ENCODE measurements at regions of chr5 and their contacts with region 1.

Region 1: GRCh38 chr5:177425801-177426565 is 493 bp upstream of the GRK6 start:
- DNase-seq: peak; percentile 100
- ATAC-seq: peak; percentile 82
- H3K4me3 ChIP-seq: peak overlapping the region; percentile 28 to 74 (median 61)
- H3K4me3 Mint-ChIP-seq: peak overlapping the region; percentile 93
- H3K27ac ChIP-seq: peak overlapping the region; percentile 82 to 88
- H3K27ac Mint-ChIP-seq: peak overlapping the region; percentile 97
- H3K4me1 ChIP-seq: peaks cover 47 to 49% of the 10 kb centered on the region in 2 donors
- H3K4me1 Mint-ChIP-seq: peaks cover 49% of the 10 kb centered on the region
- H3K27me3 ChIP-seq: no peaks in the 10 kb centered on the region
- H3K27me3 Mint-ChIP-seq: no peaks in the 10 kb centered on the region
- CTCF ChIP-seq: no peak

Region 2: GRCh38 chr5:177311723-177312648 is 114.0 kb before region 1 on chr5 and contains the start of gene MXD3:
- CTCF ChIA-PET with region 1: interaction called, 3 read pairs
- POLR2A ChIA-PET with region 1: no interaction called
- intact Hi-C with region 1: loop called (anchors 1 kb)
- DNase-seq: peak; percentile 94
- ATAC-seq: peak; percentile 89
- H3K4me3 ChIP-seq: peak within 1 kb of the TSS; percentile 15 to 80 (median 63)
- H3K4me3 Mint-ChIP-seq: peak within 1 kb of the TSS; percentile 90
- H3K27ac ChIP-seq: peak within 1 kb of the TSS; percentile 27 to 34
- H3K27ac Mint-ChIP-seq: peak within 1 kb of the TSS; percentile 84
- H3K4me1 ChIP-seq: peaks cover 40 to 58% of the 10 kb centered on the region in 2 donors
- H3K4me1 Mint-ChIP-seq: peaks cover 41% of the 10 kb centered on the region
- H3K27me3 ChIP-seq: no peaks in the 10 kb centered on the region
- H3K27me3 Mint-ChIP-seq: no peaks in the 10 kb centered on the region
- CTCF ChIP-seq: no peak
- total RNA-seq, gene MXD3: 10.8 and 11.5 TPM in 2 replicates

Region 3: GRCh38 chr5:177446200-177447065 is 20.4 kb after region 1 on chr5 and contains the start of gene PRR7:
- CTCF ChIA-PET with region 1: interaction called, 152 read pairs
- POLR2A ChIA-PET with region 1: interaction called, 103 read pairs
- intact Hi-C with region 1: loop called (anchors 1 kb)
- DNase-seq: peak; percentile 91
- ATAC-seq: peak; percentile 64
- H3K4me3 ChIP-seq: peak within 1 kb of the TSS in 4 of 5 experiments; percentile 45 to 66 (median 54)
- H3K4me3 Mint-ChIP-seq: peak within 1 kb of the TSS; percentile 82
- H3K27ac ChIP-seq: peak within 1 kb of the TSS; percentile 68 to 77
- H3K27ac Mint-ChIP-seq: peak within 1 kb of the TSS; percentile 92
- H3K4me1 ChIP-seq: peaks cover 34 to 50% of the 10 kb centered on the region in 2 donors
- H3K4me1 Mint-ChIP-seq: peaks cover 48% of the 10 kb centered on the region
- H3K27me3 ChIP-seq: peaks cover 0 to 14% (median 0%) of the 10 kb centered on the region in 4 experiments
- H3K27me3 Mint-ChIP-seq: no peaks in the 10 kb centered on the region
- CTCF ChIP-seq: no peak
- total RNA-seq, gene PRR7: 4.8 and 5.6 TPM in 2 replicates

Region 4: GRCh38 chr5:177509381-177509951 is 83.5 kb after region 1 on chr5 and contains the start of gene DOK3:
- CTCF ChIA-PET with region 1: no interaction called
- POLR2A ChIA-PET with region 1: interaction called, 6 read pairs
- intact Hi-C with region 1: loop called (anchors 1 kb)
- DNase-seq: peak; percentile 81
- ATAC-seq: peak; percentile 39
- H3K4me3 ChIP-seq: peak within 1 kb of the TSS; percentile 57 to 95 (median 75)
- H3K4me3 Mint-ChIP-seq: peak within 1 kb of the TSS; percentile 94
- H3K27ac ChIP-seq: peak within 1 kb of the TSS; percentile 91 to 96
- H3K27ac Mint-ChIP-seq: peak within 1 kb of the TSS; percentile 98
- H3K4me1 ChIP-seq: peaks cover 38 to 53% of the 10 kb centered on the region in 2 donors
- H3K4me1 Mint-ChIP-seq: peaks cover 55% of the 10 kb centered on the region
- H3K27me3 ChIP-seq: no peaks in the 10 kb centered on the region
- H3K27me3 Mint-ChIP-seq: no peaks in the 10 kb centered on the region
- CTCF ChIP-seq: no peak
- total RNA-seq, gene DOK3: 113 and 115 TPM in 2 replicates

Region 5: DNA sequence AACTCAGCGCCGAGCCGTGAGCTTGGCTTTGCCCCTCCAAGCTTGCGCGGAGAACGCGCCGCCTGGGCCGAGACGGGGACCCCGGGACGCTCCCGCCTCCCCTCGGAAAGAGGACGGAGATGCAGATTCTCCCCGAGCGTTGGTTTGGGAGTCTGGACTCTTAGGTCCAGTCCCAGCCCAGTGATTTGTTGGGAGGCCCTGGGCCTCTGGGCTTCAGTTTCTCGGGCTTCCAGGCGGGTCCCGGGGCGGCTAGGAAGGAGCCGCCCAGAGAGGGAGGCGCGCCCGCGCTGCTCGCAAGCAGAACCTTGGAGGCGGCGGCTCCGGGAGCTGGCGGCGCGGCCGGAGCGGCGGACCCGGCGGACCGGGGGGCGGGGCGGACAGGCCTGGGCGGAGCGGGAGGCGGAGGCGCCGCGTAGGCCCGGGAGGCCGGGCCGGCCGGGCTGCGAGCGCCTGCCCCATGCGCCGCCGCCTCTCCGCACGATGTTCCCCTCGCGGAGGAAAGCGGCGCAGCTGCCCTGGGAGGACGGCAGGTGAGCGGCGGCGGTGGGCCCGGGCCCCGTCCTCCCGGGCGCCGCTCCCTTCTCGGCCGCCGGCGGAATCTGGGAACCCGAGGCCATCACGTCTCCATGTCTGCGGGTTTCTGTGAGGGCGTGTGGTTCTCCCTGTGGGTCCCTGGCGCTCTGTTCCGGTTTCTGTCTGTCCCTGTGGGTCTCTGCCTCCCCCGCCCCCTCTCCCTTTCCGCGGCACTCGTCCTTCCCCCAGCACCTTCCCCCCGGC is 173.9 kb after region 1 on chr5 and contains the start of gene B4GALT7:
- CTCF ChIA-PET with region 1: no interaction called
- POLR2A ChIA-PET with region 1: interaction called, 7 read pairs
- intact Hi-C with region 1: loop called (anchors 1 kb)
- DNase-seq: peak; percentile 88
- ATAC-seq: peak; percentile 88
- H3K4me3 ChIP-seq: peak within 1 kb of the TSS; percentile 61 to 87 (median 81)
- H3K4me3 Mint-ChIP-seq: peak within 1 kb of the TSS; percentile 95
- H3K27ac ChIP-seq: peak within 1 kb of the TSS; percentile 74 to 94
- H3K27ac Mint-ChIP-seq: peak within 1 kb of the TSS; percentile 94
- H3K4me1 ChIP-seq: peaks cover 13 to 27% of the 10 kb centered on the region in 2 donors
- H3K4me1 Mint-ChIP-seq: peaks cover 29% of the 10 kb centered on the region
- H3K27me3 ChIP-seq: no peaks in the 10 kb centered on the region
- H3K27me3 Mint-ChIP-seq: no peaks in the 10 kb centered on the region
- CTCF ChIP-seq: no peak
- total RNA-seq, gene B4GALT7: 38.9 and 41.8 TPM in 2 replicates

Region 6: DNA sequence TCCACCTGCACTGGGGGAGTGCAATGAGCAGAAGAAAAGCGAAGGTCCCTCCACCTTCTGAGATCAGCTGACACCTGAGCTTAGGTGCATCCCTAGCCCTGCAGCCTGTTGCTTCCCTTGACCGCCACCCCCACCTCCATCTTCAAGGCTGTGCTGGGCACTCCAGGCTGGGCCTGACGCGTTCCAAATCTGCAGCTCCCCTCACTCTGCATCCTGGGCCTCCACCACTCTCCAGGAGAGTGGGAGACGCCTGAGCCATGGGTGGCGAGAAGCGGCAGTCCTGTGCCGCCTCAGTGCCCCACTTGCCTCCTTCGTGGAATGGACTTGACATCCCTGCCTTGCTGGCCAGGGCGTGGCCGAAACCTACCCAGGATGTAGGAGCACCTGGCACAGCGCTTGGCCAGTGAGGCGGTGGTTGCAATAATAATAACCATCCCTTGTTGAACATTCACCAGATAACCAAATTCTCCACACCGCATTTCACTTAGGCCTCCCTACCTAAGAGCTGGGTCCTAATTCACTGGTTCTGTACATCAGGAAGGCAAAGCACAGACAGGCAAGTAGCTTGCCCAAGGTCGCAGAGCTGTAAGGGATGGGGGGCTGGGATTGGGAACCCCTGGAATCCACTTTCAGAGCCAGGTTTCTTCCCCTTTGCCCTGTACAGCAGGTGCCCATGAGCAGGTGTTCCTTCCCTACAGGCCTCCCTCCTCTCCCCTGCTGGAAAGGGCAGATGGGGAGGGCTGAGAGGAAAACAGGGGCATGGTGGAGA is 185.6 kb after region 1 on chr5:
- CTCF ChIA-PET with region 1: no interaction called
- POLR2A ChIA-PET with region 1: no interaction called
- intact Hi-C with region 1: no loop called
- DNase-seq: no peak
- ATAC-seq: no peak
- H3K4me3 ChIP-seq: no peak overlapping the region
- H3K4me3 Mint-ChIP-seq: no peak overlapping the region
- H3K27ac ChIP-seq: no peak overlapping the region
- H3K27ac Mint-ChIP-seq: peak overlapping the region; percentile 37
- H3K4me1 ChIP-seq: peaks cover 5 to 10% of the 10 kb centered on the region in 2 donors
- H3K4me1 Mint-ChIP-seq: peaks cover 11% of the 10 kb centered on the region
- H3K27me3 ChIP-seq: no peaks in the 10 kb centered on the region
- H3K27me3 Mint-ChIP-seq: no peaks in the 10 kb centered on the region
- CTCF ChIP-seq: no peak

Region 7: DNA sequence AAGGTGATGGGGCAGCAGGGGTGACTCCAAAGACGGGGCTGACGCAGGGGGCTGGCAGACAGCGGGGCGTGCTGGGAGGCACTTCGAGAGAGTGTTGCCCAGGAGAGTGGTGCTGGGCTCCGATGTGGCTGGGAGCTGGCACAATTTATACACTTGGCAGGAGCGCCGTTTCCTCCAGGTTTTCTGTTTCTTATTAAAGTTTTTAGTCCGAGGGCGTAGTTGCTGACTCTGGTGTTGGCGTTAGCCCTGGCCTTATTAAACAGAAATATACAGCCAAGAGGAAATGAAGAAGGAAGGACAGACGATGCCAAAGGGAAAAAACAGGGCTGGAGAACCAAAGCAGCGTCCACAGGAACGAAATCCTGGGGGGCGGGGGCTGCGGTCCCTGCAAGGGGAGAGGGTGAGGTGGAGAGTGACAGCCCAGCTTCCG is 946.2 kb after region 1 on chr5:
- CTCF ChIA-PET with region 1: no interaction called
- POLR2A ChIA-PET with region 1: no interaction called
- intact Hi-C with region 1: no loop called
- DNase-seq: no peak
- ATAC-seq: no peak
- H3K4me3 ChIP-seq: no peak overlapping the region
- H3K4me3 Mint-ChIP-seq: no peak overlapping the region
- H3K27ac ChIP-seq: no peak overlapping the region
- H3K27ac Mint-ChIP-seq: no peak overlapping the region
- H3K4me1 ChIP-seq: no peaks in the 10 kb centered on the region
- H3K4me1 Mint-ChIP-seq: no peaks in the 10 kb centered on the region
- H3K27me3 ChIP-seq: peaks cover 0 to 9% (median 0%) of the 10 kb centered on the region in 4 experiments
- H3K27me3 Mint-ChIP-seq: peaks cover 17% of the 10 kb centered on the region
- CTCF ChIP-seq: no peak

Measured in B cell (primary cell).